ENCODE measurements at regions of chr19 and their contacts with region 1.

Region 1: GRCh38 chr19:35135389-35135909 is 590 bp upstream of the LGI4 start:
- DNase-seq: peak; percentile 82
- H3K4me3 Mint-ChIP-seq: no peak overlapping the region
- H3K27ac Mint-ChIP-seq: no peak overlapping the region
- H3K4me1 Mint-ChIP-seq: peaks cover 3% of the 10 kb centered on the region
- H3K27me3 Mint-ChIP-seq: no peaks in the 10 kb centered on the region

Region 2: GRCh38 chr19:35107546-35107945 is 27.9 kb before region 1 on chr19:
- CTCF ChIA-PET with region 1: interaction called, 15 read pairs
- POLR2A ChIA-PET with region 1: no interaction called
- intact Hi-C with region 1: no loop called
- DNase-seq: peak; percentile 44
- H3K4me3 Mint-ChIP-seq: no peak overlapping the region
- H3K27ac Mint-ChIP-seq: no peak overlapping the region
- H3K4me1 Mint-ChIP-seq: peaks cover 10% of the 10 kb centered on the region
- H3K27me3 Mint-ChIP-seq: no peaks in the 10 kb centered on the region

Region 3: DNA sequence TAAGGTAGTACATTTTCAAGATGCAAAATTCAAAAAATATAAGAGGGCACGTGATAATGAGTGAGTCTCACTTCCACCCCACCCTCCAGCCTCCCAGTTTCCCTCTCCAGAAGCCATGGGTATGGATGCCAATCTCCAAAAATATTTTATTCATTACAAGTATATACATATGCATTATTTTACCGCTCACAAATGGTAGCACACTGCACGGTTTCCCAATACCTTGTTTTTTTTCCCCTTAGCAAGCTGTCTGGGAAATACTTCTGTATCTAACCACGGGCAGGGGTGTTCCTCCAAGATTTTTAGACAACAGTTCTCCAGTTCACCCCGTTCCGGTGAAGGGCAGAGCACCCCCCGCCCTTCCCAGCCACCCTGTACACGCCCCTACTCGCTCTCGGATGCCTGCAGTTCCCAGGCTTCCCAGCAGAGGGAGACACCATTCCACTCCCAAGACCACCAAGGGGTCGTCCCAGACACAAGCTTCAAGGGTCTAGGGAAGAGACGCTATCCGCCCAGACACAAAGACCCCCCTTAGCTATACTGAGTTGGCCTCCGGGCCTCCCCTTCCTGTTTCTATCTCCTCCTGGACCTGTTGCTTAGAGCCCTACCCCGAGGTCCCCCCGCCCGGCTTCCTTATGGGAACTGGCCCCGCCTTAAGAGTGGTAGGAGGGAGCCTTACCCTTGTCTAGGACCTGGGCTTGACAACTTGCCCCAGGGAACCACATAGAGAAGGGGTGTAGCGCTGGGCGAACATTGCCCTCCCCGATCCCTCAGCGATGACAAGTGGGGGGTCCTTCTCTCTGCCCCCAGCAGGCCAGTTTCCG is 20.9 kb before region 1 on chr19:
- CTCF ChIA-PET with region 1: interaction called, 16 read pairs
- POLR2A ChIA-PET with region 1: no interaction called
- intact Hi-C with region 1: loop called (anchors 1 kb)
- DNase-seq: peak; percentile 78
- H3K4me3 Mint-ChIP-seq: no peak overlapping the region
- H3K27ac Mint-ChIP-seq: no peak overlapping the region
- H3K4me1 Mint-ChIP-seq: peaks cover 3% of the 10 kb centered on the region
- H3K27me3 Mint-ChIP-seq: no peaks in the 10 kb centered on the region

Region 4: GRCh38 chr19:35124098-35125060 is 11.1 kb before region 1 on chr19:
- CTCF ChIA-PET with region 1: interaction called, 29 read pairs
- POLR2A ChIA-PET with region 1: no interaction called
- intact Hi-C with region 1: no loop called
- DNase-seq: peak; percentile 92
- H3K4me3 Mint-ChIP-seq: peak overlapping the region; percentile 71
- H3K27ac Mint-ChIP-seq: peak overlapping the region; percentile 20
- H3K4me1 Mint-ChIP-seq: peaks cover 15% of the 10 kb centered on the region
- H3K27me3 Mint-ChIP-seq: no peaks in the 10 kb centered on the region